K562 (cell line): ENCODE measurements at regions of chr1 and their contacts with region 1.

Region 1: GRCh38 chr1:110380672-110381283 is 10.0 kb downstream of the SLC16A4 start:
- DNase-seq: no peak
- ATAC-seq: no peak
- H3K4me3 ChIP-seq: no peak overlapping the region
- H3K27ac ChIP-seq: no peak overlapping the region
- H3K4me1 ChIP-seq: no peaks in the 10 kb centered on the region
- H3K27me3 ChIP-seq: no peaks in the 10 kb centered on the region
- CTCF ChIP-seq: no peak
- EP300 ChIP-seq: no peak
- POLR2A ChIP-seq: no peak; the same call in 1 of the 2 replicates
- RAD21 ChIP-seq: no peak

Region 2: DNA sequence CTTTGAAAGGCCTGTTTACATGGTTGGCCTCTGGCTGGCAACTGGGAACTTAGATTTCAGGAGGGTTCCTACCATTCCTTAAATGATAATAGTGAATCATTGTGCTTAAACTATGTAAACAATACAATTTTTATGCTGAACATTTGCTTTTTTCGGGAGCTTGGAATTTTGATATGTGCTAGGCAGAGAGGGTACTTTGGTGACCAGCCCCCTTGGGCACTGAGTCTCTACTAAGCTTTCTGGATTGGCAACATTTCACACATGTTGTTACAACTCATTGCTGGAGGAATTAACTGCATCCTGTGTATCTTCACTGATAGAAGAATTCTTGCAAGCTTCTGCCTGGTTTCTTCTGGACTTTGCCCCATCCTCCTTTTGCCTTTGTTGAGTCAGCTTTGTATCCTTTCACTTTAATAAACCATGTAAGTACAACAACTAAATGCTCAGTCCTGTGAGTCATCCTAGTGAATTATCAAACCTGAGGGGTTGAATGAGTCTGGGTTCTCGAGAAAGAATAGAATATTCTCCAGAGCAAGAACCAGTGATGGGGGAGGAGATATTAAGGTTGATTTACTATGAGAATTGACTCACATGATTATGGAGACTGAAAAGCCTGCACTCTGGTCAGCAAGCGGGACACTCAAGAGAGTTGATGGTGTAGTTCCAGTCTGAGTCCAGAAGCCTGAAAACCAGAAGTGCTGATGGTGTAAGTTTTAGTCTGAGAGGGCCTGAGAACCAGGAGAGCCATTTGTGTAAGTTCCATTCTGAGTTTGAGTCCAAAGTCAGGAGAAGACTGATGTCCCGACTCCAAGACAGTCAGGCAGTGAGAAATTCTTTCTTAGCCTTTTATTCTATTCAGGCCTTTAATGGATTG is 13.2 kb after region 1 on chr1:
- CTCF ChIA-PET with region 1: no interaction called
- POLR2A ChIA-PET with region 1: interaction called, 17 read pairs
- in situ Hi-C with region 1: no loop called
- intact Hi-C with region 1: no loop called
- DNase-seq: no peak
- ATAC-seq: no peak
- H3K4me3 ChIP-seq: no peak overlapping the region
- H3K27ac ChIP-seq: no peak overlapping the region
- H3K4me1 ChIP-seq: no peaks in the 10 kb centered on the region
- H3K27me3 ChIP-seq: no peaks in the 10 kb centered on the region
- CTCF ChIP-seq: no peak
- EP300 ChIP-seq: no peak
- POLR2A ChIP-seq: no peak
- RAD21 ChIP-seq: no peak

Region 3: DNA sequence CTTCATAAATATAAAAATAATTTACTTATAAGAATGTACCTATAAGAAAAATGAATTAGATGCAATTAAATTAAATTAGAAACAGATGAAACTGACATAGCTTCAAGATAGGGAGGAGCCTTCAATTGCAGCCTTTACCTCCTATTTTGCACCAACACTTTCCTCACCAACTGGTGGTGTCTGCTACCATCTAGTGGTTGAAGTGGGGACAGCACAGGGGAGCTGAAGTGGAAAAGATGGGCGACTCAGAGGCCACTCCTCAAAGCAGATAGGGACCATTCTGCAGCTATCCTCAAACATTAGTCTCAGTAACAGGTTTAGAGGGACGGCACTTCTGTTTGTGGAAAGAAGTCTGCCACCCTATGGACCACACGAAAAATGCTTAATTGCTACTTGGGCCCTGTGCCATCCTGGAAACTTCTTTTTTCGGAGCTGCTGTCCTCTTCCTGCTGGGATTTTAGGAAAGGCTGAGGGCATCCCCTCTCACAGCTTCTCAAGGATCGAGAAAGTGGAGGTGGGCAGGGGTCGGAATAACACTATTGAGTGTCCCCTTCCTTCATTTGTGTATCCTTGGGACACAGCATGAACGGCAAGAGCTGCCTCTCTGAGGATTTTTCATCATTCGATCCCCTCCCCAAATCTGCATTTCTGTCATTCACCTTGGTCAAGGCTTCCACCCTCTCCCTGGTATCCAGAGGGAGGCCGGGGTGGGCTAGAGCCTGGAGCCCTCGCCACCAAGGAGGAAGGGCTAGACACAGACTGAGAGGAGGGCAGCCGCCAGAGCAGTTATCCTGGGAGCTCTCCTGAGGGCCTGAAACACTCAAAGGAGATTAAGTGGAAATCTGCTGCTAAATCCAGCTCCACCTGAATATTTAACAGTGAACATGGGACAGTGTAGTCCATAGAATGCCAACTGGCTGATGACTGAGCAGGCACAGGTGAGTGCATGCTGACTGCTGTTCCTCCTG is 79.8 kb after region 1 on chr1:
- CTCF ChIA-PET with region 1: no interaction called
- POLR2A ChIA-PET with region 1: no interaction called
- in situ Hi-C with region 1: no loop called
- intact Hi-C with region 1: no loop called
- DNase-seq: peak; percentile 83 to 89 (median 88)
- ATAC-seq: peak; percentile 93
- H3K4me3 ChIP-seq: no peak overlapping the region
- H3K27ac ChIP-seq: no peak overlapping the region
- H3K4me1 ChIP-seq: peaks cover under 1 to 2% of the 10 kb centered on the region in 2 experiments; a peak in 3 of 5 replicates
- H3K27me3 ChIP-seq: peaks cover 0 to 19% of the 10 kb centered on the region in 2 experiments; a peak in 3 of 5 replicates
- CTCF ChIP-seq: peak; percentile 96 to 99 (median 98)
- EP300 ChIP-seq: no peak
- POLR2A ChIP-seq: no peak
- RAD21 ChIP-seq: peak; percentile 99

Region 4: DNA sequence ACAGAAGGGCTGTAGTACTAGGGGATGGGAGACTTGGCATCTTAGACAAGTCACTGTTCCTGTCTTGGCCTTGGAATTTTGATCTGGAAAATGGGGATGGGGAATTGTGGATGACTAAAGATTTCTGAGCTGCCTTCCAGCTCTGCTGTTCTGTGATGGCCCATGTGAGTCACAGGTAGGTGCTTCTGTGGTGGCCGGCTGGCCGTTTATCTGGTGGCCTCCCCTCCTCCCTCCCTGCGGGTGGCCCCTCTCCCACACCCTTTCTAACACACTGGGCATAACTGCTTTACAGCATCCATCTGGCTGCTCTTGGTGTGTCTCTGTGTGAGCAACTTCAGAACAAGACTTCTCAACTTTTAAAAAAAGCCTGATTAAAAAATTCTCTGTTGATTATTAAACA is 189.5 kb after region 1 on chr1:
- CTCF ChIA-PET with region 1: no interaction called
- POLR2A ChIA-PET with region 1: no interaction called
- in situ Hi-C with region 1: no loop called
- intact Hi-C with region 1: no loop called
- DNase-seq: no peak
- ATAC-seq: no peak
- H3K4me3 ChIP-seq: no peak overlapping the region
- H3K27ac ChIP-seq: no peak overlapping the region
- H3K4me1 ChIP-seq: no peaks in the 10 kb centered on the region
- H3K27me3 ChIP-seq: peaks cover 3 to 12% of the 10 kb centered on the region in 2 experiments; a peak in 4 of 5 replicates
- CTCF ChIP-seq: no peak
- EP300 ChIP-seq: no peak
- POLR2A ChIP-seq: no peak
- RAD21 ChIP-seq: no peak